OCI-LY7 (cell line): ENCODE measurements at regions of chr2 and their contacts with region 1.

Region 1: DNA sequence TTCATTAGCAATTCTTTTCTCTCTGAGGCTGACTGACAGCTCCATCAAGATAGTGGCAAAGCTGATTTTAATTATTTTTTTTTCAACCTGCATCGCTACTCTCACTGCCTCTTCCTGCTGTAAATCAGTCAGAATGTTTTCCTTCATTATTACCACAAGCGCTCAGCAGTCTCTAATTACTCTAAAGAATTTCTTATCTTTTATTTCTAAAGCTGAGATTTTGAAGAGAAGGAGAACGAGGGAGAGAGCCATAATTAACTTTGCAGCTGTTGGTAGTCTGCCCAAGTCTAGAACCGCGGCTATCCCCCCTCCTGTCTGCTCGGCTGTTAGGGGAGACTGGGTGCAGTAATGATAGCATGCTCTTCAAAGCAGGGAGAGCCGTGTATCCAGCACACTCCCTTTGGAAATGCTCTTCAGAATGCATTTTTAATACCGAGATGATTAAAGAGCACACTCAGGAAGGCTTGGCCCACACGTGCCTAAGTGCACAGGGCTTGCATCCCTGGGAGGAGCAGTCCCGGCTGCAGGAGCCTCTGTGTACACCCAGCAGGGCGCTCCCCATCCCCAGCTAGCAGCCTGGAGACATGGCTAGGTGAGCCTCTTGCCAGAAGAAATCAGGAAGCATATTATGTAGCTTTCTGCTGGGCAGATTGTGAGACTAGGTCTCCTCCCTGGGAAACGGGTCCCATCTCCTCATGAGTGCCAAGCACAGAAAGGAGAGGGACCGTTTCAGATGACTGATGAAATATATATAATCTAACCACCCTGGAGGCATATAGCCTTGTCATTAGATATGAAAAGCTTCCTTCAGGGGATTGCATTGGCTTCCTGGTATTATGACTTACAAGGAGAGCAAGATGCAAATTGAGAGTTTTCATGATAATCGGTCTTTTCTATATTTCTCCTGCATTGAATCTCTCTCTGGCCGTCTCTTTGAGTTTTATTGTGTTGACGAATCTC is 555.2 kb downstream of the CMPK2 start:
- DNase-seq: peak; percentile 72
- H3K4me3 ChIP-seq: peak overlapping the region; percentile 59
- H3K27ac ChIP-seq: peak overlapping the region; percentile 99
- H3K4me1 ChIP-seq: peaks cover 75% of the 10 kb centered on the region
- CTCF ChIP-seq: no peak

Region 2: GRCh38 chr2:6214471-6214870 is 96.1 kb before region 1 on chr2:
- CTCF ChIA-PET with region 1: no interaction called
- POLR2A ChIA-PET with region 1: interaction called, 3 read pairs
- intact Hi-C with region 1: loop called (anchors 2 kb)
- DNase-seq: peak; percentile 51
- H3K4me3 ChIP-seq: no peak overlapping the region
- H3K27ac ChIP-seq: no peak overlapping the region
- H3K4me1 ChIP-seq: peaks cover 18% of the 10 kb centered on the region
- CTCF ChIP-seq: peak; percentile 53; the same call in 1 of the 2 replicates

Region 3: GRCh38 chr2:6434438-6434837 is 123.9 kb after region 1 on chr2:
- CTCF ChIA-PET with region 1: no interaction called
- POLR2A ChIA-PET with region 1: no interaction called
- intact Hi-C with region 1: no loop called
- DNase-seq: no peak
- H3K4me3 ChIP-seq: no peak overlapping the region
- H3K27ac ChIP-seq: no peak overlapping the region
- H3K4me1 ChIP-seq: no peaks in the 10 kb centered on the region
- CTCF ChIP-seq: no peak